Heart left ventricle (tissue), 16 donors: ENCODE measurements at regions of chr6 and their contacts with region 1.

Region 1: DNA sequence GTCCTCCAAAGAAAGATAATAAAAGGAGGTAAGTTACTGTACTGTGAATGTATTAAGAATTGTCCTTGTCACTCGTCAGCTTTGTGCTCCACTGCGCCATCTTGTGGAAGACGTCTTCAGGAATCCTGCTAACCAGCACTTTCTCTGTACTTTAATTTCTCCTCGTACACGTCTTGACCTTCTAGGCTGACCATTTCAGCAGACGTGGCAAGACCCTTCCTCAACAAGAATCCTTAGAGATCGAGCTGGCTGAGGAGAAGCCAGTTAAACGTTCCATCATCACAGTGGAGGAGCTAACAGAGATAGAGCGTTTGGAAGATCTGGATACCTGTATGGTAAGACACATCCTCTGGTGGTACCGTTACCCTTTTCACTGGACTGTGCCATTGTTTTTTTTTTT is 95.5 kb upstream of the SCGN start:
- DNase-seq: peak; percentile 66 to 81 (median 71)
- ATAC-seq: peak in 3 of 4 donors; percentile 42 to 61 (median 48)
- H3K4me3 ChIP-seq: no peak overlapping the region
- H3K27ac ChIP-seq: no peak overlapping the region
- H3K4me1 ChIP-seq: peaks cover 0 to 3% (median 0%) of the 10 kb centered on the region in 12 donors
- H3K27me3 ChIP-seq: no peaks in the 10 kb centered on the region
- CTCF ChIP-seq: peak; percentile 70 to 90 (median 82)
- POLR2A ChIP-seq: no peak

Region 2: GRCh38 chr6:25223490-25223991 is 333.0 kb before region 1 on chr6:
- intact Hi-C with region 1: loop called in 9 of 10 experiments (anchors 1 to 5 kb)
- DNase-seq: peak; percentile 50 to 73 (median 61)
- ATAC-seq: peak in 2 of 4 donors; percentile 54 to 63
- H3K4me3 ChIP-seq: peak overlapping the region in 9 of 12 donors; percentile 23 to 39 (median 30)
- H3K27ac ChIP-seq: peak overlapping the region in 8 of 12 donors; percentile 5 to 54 (median 26)
- H3K4me1 ChIP-seq: peaks cover 2 to 33% (median 9%) of the 10 kb centered on the region in 12 donors
- H3K27me3 ChIP-seq: no peaks in the 10 kb centered on the region
- CTCF ChIP-seq: peak; percentile 77 to 94 (median 88)
- POLR2A ChIP-seq: no peak

Region 3: DNA sequence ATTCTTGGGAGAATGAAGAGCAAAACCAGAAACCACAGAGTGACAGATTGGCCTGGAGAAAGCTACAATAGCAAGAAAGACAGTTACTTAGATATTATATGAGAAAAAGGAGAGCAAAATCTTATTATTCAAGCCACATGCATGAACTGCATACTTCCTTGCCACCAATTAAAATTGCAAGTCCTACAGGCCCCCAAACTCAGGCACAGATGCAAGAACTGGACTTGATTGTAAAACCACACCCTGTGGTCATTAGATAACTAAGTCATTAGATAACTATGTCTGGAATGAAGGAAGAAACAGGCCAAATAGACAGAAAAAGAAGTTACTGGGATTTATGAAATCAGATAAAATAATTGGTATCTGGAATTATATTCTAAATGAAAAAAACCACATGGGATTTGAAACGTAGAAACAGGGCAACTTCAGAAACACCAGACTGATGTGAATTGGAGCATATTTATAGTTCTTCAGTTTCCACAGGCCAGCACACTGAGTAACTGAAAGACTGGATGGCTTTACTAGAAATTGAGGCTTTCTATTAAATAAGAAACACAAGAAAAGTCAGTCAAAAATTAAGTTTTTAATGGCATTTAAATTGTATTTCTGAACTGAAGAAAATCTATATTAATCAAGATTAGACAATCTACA is 326.7 kb before region 1 on chr6:
- intact Hi-C with region 1: loop called in 9 of 10 experiments (anchors 1 to 10 kb)
- DNase-seq: no peak
- ATAC-seq: peak in 3 of 4 donors; percentile 37 to 58 (median 42)
- H3K4me3 ChIP-seq: no peak overlapping the region
- H3K27ac ChIP-seq: peak overlapping the region in 4 of 12 donors; percentile 34 to 50 (median 42)
- H3K4me1 ChIP-seq: peaks cover 0 to 8% (median 0%) of the 10 kb centered on the region in 12 donors
- H3K27me3 ChIP-seq: no peaks in the 10 kb centered on the region
- CTCF ChIP-seq: no peak
- POLR2A ChIP-seq: no peak

Region 4: GRCh38 chr6:25263657-25264056 is 292.9 kb before region 1 on chr6:
- intact Hi-C with region 1: loop called in 6 of 10 experiments (anchors 2 to 5 kb)
- DNase-seq: no peak
- ATAC-seq: no peak
- H3K4me3 ChIP-seq: no peak overlapping the region
- H3K27ac ChIP-seq: no peak overlapping the region
- H3K4me1 ChIP-seq: peaks cover 0 to 8% (median 2%) of the 10 kb centered on the region in 12 donors
- H3K27me3 ChIP-seq: no peaks in the 10 kb centered on the region
- CTCF ChIP-seq: no peak
- POLR2A ChIP-seq: no peak

Region 5: DNA sequence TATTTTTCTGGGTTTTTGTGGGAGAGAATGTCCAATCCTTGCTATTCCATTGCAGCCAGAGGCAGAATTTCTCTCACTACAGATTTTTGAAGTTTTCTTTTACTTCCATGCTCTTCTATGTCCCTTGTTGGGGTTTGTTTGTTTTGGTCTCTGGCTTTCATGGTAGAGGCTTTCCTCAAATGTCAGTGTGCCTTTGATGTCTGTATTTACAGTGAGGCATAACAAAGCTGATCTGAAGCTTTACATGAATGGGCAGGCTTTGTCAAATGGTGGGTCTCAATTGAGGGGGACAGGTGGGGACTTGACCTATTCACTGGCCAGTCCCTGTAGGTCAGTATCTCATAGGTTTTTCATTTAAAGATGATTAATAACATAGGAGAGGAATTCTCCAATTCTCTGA is 286.0 kb before region 1 on chr6:
- intact Hi-C with region 1: loop called in 8 of 10 experiments (anchors 2 to 5 kb)
- DNase-seq: no peak
- ATAC-seq: no peak
- H3K4me3 ChIP-seq: no peak overlapping the region
- H3K27ac ChIP-seq: no peak overlapping the region
- H3K4me1 ChIP-seq: peaks cover 0 to 7% (median 2%) of the 10 kb centered on the region in 12 donors
- H3K27me3 ChIP-seq: peaks cover 0 to 5% (median 0%) of the 10 kb centered on the region in 9 donors
- CTCF ChIP-seq: no peak
- POLR2A ChIP-seq: no peak

Region 6: GRCh38 chr6:25278914-25279747 is 277.4 kb before region 1 on chr6 and contains the start of gene CARMIL1:
- intact Hi-C with region 1: loop called in 2 of 10 experiments (anchors 5 kb)
- DNase-seq: peak; percentile 79 to 89 (median 81)
- ATAC-seq: peak; percentile 65 to 94 (median 92)
- H3K4me3 ChIP-seq: peak within 1 kb of the TSS; percentile 64 to 96 (median 76)
- H3K27ac ChIP-seq: peak within 1 kb of the TSS; percentile 23 to 87 (median 62)
- H3K4me1 ChIP-seq: peaks cover 0 to 25% (median 8%) of the 10 kb centered on the region in 12 donors
- H3K27me3 ChIP-seq: peaks cover 0 to 20% (median 0%) of the 10 kb centered on the region in 9 donors
- CTCF ChIP-seq: peak; percentile 56 to 91 (median 74)
- POLR2A ChIP-seq: no peak
- total RNA-seq, gene CARMIL1: 2.4 to 9.1 (median 5.8) TPM